Activated CD4-positive, alpha-beta T cell treated with anti-CD3 and anti-CD28 coated beads, Interleukin-2, amount 10 ng/mL, durations not matched to agents 24 days and 14 days (primary cell): ENCODE measurements at regions of chr17 and their contacts with region 1.

Region 1: GRCh38 chr17:42312285-42313130 is 24.2 kb downstream of the STAT5A start:
- DNase-seq: peak; percentile 93
- H3K4me3 Mint-ChIP-seq: peak overlapping the region; percentile 81
- H3K27ac Mint-ChIP-seq: peak overlapping the region; percentile 77
- H3K4me1 Mint-ChIP-seq: peaks cover 63% of the 10 kb centered on the region
- H3K27me3 Mint-ChIP-seq: no peaks in the 10 kb centered on the region

Region 2: DNA sequence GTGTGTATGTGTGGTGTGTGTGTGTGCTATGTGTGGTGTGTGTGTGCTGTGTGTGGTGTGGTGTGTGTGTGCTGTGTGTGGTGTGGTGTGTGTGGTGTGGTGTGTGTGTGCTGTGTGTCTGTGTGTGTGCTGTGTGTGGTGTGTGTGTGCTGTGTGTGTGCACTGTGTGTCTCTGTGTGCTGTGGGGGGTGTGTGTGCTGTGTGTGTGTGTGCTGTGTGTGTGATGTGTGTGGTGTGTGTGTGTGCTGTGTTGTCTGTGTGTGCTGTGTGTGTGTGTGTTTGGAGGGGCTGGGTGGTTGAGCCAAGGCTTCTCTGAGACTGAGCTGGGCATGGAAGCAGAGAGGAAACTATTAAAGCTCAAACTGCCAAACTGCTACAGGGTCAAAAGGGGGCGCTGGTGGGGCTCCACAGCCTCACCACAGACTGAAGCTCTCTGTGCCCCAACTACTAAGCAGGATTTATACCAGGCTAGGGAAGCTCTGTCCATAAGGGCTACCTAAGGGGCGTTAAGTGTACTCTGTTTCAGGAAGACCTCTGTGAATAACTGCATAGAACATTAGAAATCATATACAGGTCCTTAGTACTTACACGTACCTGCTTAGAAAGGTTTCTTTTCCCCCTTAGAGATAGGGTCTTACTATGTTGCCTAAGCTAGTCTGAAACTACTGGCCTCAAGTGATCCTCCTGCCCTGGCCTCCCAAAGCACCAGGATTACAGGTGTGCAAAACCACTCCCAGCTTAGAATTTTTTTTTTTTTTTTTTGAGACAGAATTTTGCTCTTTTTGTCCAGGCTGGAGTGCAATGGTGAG is 90.4 kb before region 1 on chr17:
- intact Hi-C with region 1: loop called (anchors 1 kb)
- DNase-seq: peak; percentile 85
- H3K4me3 Mint-ChIP-seq: no peak overlapping the region
- H3K27ac Mint-ChIP-seq: peak overlapping the region; percentile 27
- H3K4me1 Mint-ChIP-seq: peaks cover 7% of the 10 kb centered on the region
- H3K27me3 Mint-ChIP-seq: no peaks in the 10 kb centered on the region

Region 3: GRCh38 chr17:42322382-42323267 is 10.1 kb after region 1 on chr17:
- intact Hi-C with region 1: loop called (anchors 1 kb)
- DNase-seq: peak; percentile 98
- H3K4me3 Mint-ChIP-seq: peak overlapping the region; percentile 39
- H3K27ac Mint-ChIP-seq: peak overlapping the region; percentile 73
- H3K4me1 Mint-ChIP-seq: peaks cover 41% of the 10 kb centered on the region
- H3K27me3 Mint-ChIP-seq: no peaks in the 10 kb centered on the region

Region 4: DNA sequence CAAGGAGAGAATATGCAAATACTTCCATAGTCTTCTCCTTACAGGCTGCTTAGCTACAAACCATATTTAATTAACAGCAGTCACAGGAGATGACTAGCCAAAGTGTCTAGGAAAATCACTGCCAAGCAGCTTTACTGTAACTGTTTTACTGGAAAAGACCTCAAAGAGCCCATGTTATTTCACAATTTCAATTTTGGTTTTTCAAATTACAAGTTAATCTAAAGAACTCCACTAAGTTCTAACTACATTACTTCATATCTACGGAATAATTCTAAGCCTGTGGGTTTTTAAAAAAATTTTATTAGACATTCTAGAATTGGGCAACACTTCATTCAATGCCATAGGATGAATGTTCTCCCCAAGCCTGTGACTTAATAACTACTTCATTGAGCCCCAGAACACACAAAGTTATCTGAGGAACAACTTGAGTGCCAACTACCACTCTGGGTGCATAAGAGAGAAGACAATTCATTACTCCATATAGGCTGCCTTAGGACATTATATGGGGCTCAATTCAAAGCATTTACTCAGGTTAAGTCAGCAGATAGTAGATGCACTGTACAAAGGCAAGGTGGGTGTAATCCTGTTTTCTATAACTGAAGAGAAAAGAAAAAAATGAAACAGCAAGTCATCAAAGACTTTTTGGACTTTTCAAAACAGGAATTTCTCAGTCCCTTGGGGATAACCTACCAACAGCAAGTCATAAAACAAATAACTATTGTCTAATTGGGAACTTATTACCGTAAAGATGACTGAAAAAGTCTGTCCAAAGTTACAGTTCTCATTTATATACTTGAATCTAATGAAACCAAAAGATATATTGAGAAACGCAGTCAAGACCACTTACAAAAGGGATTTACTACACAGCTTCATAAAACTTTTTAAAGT is 42.7 kb after region 1 on chr17:
- intact Hi-C with region 1: no loop called
- DNase-seq: no peak
- H3K4me3 Mint-ChIP-seq: peak overlapping the region; percentile 38
- H3K27ac Mint-ChIP-seq: peak overlapping the region; percentile 39
- H3K4me1 Mint-ChIP-seq: peaks cover 39% of the 10 kb centered on the region
- H3K27me3 Mint-ChIP-seq: no peaks in the 10 kb centered on the region

Region 5: DNA sequence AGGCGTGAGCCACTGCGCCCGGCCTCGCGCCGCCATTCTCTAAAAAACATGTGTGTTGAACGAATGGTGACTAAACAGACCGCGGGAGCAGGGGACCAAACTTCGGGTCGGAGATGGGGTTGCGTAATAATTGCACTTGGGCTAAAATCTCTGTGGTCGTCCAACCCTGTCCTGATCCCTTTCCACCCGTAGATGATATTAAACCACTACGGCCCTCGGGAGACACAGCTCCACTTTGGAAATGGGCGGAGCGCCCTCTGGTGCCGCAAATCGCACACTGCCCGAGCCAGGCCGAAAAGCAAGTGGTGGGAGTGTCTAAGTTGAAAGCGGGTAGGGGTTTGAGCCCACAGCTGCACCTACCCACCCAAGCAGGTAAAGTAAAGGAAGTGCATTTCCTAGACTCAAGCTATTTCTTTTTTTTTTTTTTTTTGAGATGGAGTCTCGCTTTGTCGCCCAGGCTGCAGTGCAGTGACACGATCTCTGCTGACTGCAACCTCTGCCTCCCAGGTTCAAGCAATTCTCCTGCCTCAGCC is 93.5 kb after region 1 on chr17:
- intact Hi-C with region 1: loop called (anchors 2 kb)
- DNase-seq: peak; percentile 95
- H3K4me3 Mint-ChIP-seq: no peak overlapping the region
- H3K27ac Mint-ChIP-seq: no peak overlapping the region
- H3K4me1 Mint-ChIP-seq: peaks cover 21% of the 10 kb centered on the region
- H3K27me3 Mint-ChIP-seq: peaks cover 4% of the 10 kb centered on the region

Region 6: DNA sequence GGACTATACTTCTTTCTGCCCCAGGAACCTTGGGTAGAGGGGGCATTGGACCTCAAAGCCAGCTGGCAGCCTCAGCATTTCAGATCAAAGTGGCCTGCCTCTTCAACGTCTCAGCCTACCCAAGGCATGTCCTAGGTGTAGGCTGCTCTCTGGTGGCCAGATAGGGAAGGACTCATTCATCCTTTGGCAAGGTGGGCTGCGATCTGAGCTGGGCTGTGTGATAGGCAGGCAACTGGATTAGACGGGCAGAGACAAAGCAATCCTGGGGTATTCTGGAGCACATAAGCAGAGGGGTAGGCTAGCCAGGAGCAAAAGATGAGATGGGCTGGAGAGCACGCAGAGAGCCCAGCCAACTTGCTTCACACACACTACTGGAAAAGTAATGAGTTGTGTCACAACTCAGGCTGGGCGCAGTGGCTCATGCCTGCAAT is 214.8 kb after region 1 on chr17:
- intact Hi-C with region 1: loop called (anchors 5 kb)
- DNase-seq: peak; percentile 92
- H3K4me3 Mint-ChIP-seq: no peak overlapping the region
- H3K27ac Mint-ChIP-seq: no peak overlapping the region
- H3K4me1 Mint-ChIP-seq: peaks cover 24% of the 10 kb centered on the region
- H3K27me3 Mint-ChIP-seq: peaks cover 7% of the 10 kb centered on the region